G401 (cell line): ENCODE measurements at regions of chr5 and their contacts with region 1.

Region 1: DNA sequence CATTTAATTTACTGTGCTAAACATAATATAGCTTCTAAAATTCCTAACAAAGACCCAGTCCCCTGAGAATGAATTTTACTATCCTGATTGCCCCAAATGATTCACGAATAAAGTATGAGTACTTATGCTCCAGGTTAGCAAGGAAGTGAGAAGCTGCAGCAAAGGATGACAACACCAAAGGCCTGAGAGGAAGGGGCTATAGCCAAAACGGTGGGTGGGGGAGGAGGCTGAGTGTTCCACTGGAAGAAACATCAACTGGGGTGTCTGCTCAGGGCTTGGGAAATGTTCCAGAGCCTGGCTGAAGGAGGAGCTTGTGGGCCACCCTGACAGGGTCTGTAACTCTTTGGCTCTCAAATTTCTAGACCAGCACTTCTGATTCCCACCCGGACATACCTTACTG is 157.3 kb downstream of the ADAMTS12 start:
- DNase-seq: no peak

Region 2: DNA sequence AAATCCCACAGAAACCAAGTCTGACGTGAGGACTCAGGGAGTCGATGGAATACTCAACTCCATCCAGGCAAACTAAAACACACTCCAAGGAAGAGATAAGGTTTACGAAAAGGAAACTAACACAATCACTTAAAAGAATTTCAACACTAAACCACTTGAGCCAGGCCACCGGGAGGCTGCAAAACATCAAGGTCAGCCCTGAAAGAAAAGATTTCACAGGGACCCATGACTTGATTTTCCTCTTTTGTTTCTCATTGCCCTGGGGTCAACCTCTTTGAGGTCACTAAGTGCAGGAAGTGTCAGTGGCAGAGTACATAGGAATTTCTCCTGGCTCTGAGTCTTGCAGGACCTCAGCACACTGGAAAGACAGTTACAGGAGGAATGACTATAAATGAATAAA is 371.6 kb before region 1 on chr5:
- in situ Hi-C with region 1: no loop called
- DNase-seq: no peak

Region 3: GRCh38 chr5:33588654-33589372 is 145.7 kb before region 1 on chr5:
- in situ Hi-C with region 1: no loop called
- DNase-seq: no peak

Region 4: DNA sequence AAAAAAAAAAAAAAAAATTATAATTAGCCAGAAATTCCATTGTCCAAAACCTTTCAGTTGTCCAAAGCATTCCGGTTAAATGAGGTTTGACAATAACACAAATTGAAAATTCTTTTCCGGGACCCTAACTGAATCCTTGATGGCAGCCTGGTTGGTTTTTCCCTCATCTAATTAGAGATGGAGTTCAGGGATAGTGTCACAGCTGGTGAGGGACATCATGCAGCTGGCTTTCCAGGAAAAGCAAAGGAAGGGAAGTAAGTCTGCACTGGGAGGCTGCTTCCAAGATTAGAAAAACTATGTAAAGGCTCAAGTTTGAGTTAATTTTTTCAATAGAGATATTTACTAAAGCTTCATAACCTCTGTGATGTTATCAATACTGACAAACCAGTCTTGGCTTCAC is 38.1 kb before region 1 on chr5:
- in situ Hi-C with region 1: loop called (anchors 5 kb)
- DNase-seq: no peak

Region 5: DNA sequence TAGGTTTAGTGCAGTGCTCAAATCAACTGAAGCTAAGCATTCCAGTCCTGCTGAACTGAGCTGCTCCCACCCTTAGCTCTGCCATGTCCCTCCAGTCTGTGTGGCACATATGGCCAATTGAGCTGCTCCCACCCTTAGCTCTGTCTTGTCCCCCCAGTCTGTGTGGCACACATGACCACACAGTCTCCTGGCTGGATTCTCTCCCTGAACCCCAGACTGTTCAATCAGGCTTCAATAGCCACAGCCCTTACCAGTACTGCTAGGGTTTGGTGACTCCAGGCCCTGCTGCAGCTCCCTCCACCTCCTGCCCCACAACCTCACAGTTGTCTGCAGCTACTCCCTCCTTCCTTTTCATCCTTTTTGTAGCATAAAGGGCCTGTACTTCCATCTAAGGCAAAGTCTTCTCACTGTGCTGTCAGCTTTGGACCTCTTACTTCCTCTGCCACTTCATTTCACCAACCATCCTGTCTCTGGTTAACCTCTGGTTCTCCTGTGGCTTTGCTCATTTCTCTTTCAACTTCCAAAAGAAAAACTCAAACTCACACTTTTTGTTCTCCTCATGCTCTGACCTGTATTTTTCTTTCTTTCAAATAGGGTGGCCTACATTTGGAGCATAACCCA is 106.5 kb after region 1 on chr5:
- in situ Hi-C with region 1: no loop called
- DNase-seq: no peak